Heart left ventricle (tissue), 16 donors: ENCODE measurements at regions of chr1 and their contacts with region 1.

Region 1: GRCh38 chr1:151008190-151008860 is at the start of gene PRUNE1:
- DNase-seq: peak; percentile 97 to 98 (median 98)
- ATAC-seq: peak; percentile 80 to 94 (median 92)
- H3K4me3 ChIP-seq: peak within 1 kb of the TSS; percentile 35 to 87 (median 75)
- H3K27ac ChIP-seq: peak within 1 kb of the TSS; percentile 80 to 96 (median 91)
- H3K4me1 ChIP-seq: peaks cover 12 to 89% (median 66%) of the 10 kb centered on the region in 12 donors
- H3K27me3 ChIP-seq: no peaks in the 10 kb centered on the region
- CTCF ChIP-seq: peak in 2 of 12 donors; percentile 9
- POLR2A ChIP-seq: peak; percentile 56 to 83
- total RNA-seq, gene PRUNE1: 32.5 to 65.3 (median 42.0) TPM

Region 2: DNA sequence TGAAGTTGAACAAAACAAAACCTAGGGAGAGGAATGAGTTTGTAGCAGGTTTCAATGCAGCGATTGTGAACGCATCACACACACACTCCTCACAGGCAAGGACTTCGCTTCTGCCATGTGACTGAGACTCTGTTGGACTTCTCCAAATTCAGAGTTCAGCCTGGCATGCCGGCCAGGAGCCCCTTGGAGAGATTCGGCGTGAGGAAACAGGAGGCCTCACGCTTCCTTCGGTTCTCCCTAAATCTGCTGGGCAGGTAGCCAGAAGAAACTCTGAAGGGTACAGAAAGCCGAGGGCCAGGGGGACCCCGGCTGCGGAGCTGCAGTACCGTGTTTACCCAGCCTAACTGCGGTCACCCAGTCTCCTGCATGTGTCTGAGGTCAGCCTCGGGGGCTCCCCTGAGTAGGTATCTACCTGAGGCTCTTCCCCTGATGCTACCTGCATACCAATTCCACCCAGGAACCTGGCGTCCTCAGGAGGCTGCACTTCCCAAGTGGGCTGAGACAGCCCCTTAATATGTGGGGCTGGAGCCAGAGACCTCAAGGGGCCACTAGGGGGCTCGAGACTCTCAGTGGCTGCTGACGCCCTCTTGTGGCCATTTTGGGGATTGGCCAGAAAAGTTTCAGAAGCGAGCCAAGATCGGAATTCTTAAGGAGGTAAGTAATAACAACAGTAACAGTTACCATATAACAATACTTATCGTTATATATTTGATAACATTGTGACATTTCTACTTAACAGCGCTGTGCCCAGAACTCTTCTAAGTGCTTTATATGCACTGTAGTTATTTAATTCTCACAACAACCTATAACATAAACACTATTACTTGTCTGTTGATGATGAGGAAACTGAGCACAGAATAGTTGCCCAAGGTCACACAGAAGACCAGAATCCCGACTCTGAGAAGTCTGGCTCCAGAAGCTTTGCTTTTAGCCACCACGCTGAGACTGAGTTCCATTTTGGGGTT is 29.0 kb before region 1 on chr1:
- intact Hi-C with region 1: loop called in 1 of 10 experiments (anchors 1 kb)
- DNase-seq: peak; percentile 84 to 89 (median 87)
- ATAC-seq: peak; percentile 17 to 60 (median 40)
- H3K4me3 ChIP-seq: peak overlapping the region in 7 of 12 donors; percentile 4 to 48 (median 19)
- H3K27ac ChIP-seq: peak overlapping the region in 6 of 12 donors; percentile 22 to 86 (median 42)
- H3K4me1 ChIP-seq: peaks cover 0 to 49% (median 9%) of the 10 kb centered on the region in 12 donors
- H3K27me3 ChIP-seq: no peaks in the 10 kb centered on the region
- CTCF ChIP-seq: peak; percentile 99 to 100 (median 100)
- POLR2A ChIP-seq: no peak

Region 3: GRCh38 chr1:151047925-151048645 is 39.8 kb after region 1 on chr1:
- intact Hi-C with region 1: loop called in 1 of 10 experiments (anchors 5 kb)
- DNase-seq: peak; percentile 72 to 84 (median 79)
- ATAC-seq: peak; percentile 70 to 86 (median 84)
- H3K4me3 ChIP-seq: peak overlapping the region; percentile 60 to 87 (median 77)
- H3K27ac ChIP-seq: peak overlapping the region; percentile 53 to 95 (median 90)
- H3K4me1 ChIP-seq: peaks cover 0 to 42% (median 19%) of the 10 kb centered on the region in 12 donors
- H3K27me3 ChIP-seq: no peaks in the 10 kb centered on the region
- CTCF ChIP-seq: peak in 10 of 12 donors; percentile 30 to 65 (median 50)
- POLR2A ChIP-seq: no peak

Region 4: DNA sequence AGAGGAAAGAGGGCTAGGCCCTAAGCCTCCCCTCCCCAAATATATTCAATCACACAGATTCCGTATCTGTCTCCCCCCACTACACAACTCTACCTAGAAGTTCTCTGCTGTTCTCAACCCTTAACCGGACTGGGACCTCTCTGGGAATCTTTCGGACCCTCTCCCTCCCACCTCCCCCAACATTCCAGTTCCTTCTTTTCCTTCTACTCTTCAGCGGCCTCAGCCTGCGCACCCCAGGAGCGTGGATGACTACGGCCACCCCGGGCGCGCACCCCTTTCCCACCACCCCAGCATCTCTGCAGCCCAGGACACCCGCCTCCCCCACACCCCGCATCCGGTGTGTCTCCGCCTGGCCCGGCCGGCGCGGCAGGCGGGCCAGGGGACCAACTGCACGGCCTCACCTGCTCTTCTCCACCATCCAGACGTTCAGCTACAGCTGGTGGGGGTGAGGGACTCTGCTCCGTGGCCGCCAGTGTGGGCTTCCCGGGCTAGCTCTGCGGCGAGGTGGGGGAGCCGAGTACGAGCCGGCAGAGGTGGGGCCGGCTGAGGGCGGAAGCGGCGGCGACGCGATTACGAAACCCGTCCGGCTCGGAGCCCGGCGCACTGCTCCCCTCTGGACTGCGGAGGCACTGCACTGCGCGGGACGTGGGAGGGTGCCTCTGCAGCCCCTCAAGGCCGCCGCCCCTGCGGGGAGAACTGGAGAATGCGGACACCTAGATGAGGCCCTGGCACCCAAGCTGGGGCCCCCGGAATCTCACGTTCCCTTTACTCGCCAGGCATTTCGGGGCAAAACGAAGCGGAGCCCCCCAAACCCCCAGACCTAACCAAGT is 51.0 kb after region 1 on chr1 and contains the start of gene CDC42SE1:
- intact Hi-C with region 1: loop called in 4 of 10 experiments (anchors 5 kb)
- DNase-seq: peak; percentile 87 to 93 (median 90)
- ATAC-seq: peak; percentile 87 to 93 (median 92)
- H3K4me3 ChIP-seq: peak within 1 kb of the TSS; percentile 71 to 98 (median 90)
- H3K27ac ChIP-seq: peak within 1 kb of the TSS; percentile 92 to 99 (median 96)
- H3K4me1 ChIP-seq: peaks cover 8 to 53% (median 31%) of the 10 kb centered on the region in 12 donors
- H3K27me3 ChIP-seq: no peaks in the 10 kb centered on the region
- CTCF ChIP-seq: peak; percentile 61 to 94 (median 86)
- POLR2A ChIP-seq: peak; percentile 52 to 86
- total RNA-seq, gene CDC42SE1: 21.7 to 65.9 (median 28.2) TPM

Region 5: GRCh38 chr1:151070474-151071276 is 62.4 kb after region 1 on chr1 and contains the start of gene GABPB2:
- intact Hi-C with region 1: loop called in 1 of 10 experiments (anchors 5 kb)
- DNase-seq: peak; percentile 94 to 97 (median 95)
- ATAC-seq: peak; percentile 92 to 96 (median 94)
- H3K4me3 ChIP-seq: peak within 1 kb of the TSS; percentile 44 to 98 (median 81)
- H3K27ac ChIP-seq: peak within 1 kb of the TSS; percentile 92 to 100 (median 99)
- H3K4me1 ChIP-seq: peaks cover 0 to 23% (median 10%) of the 10 kb centered on the region in 12 donors
- H3K27me3 ChIP-seq: no peaks in the 10 kb centered on the region
- CTCF ChIP-seq: peak; percentile 88 to 99 (median 92)
- POLR2A ChIP-seq: peak in 1 of 2 donors; percentile 35
- total RNA-seq, gene GABPB2: 5.9 to 15.2 (median 11.7) TPM

Region 6: GRCh38 chr1:151146412-151147140 is 138.3 kb after region 1 on chr1 and contains the start of gene SEMA6C:
- intact Hi-C with region 1: loop called in 1 of 10 experiments (anchors 5 kb)
- DNase-seq: peak; percentile 97 to 98 (median 98)
- ATAC-seq: peak; percentile 93 to 95 (median 93)
- H3K4me3 ChIP-seq: peak within 1 kb of the TSS; percentile 66 to 97 (median 84)
- H3K27ac ChIP-seq: peak within 1 kb of the TSS; percentile 79 to 92 (median 87)
- H3K4me1 ChIP-seq: peaks cover 13 to 53% (median 39%) of the 10 kb centered on the region in 12 donors
- H3K27me3 ChIP-seq: peaks cover 0 to 5% (median 0%) of the 10 kb centered on the region in 9 donors
- CTCF ChIP-seq: no peak
- POLR2A ChIP-seq: peak; percentile 94 to 97
- total RNA-seq, gene SEMA6C: 36.4 to 97.1 (median 50.8) TPM

Region 7: DNA sequence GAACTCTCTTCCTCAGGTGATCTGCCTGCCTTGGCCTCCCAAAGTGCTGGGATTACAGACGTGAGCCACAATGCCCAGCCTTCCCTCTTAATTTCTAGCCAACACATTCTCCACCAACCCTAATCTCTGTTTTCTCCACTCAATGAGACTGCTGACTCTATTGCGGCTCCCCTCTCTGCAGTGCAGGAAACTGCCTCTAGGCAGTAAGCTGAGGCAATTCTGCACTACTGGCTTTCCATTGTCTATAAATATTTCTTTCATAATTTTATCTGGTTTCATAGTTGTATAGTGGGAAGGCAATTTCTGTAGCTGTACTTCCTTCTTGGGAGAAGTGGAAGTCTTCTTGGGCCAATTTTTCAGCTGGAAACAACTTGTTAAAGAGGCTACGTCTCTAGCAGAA is 744.8 kb after region 1 on chr1:
- intact Hi-C with region 1: no loop called
- DNase-seq: no peak
- ATAC-seq: no peak
- H3K4me3 ChIP-seq: no peak overlapping the region
- H3K27ac ChIP-seq: no peak overlapping the region
- H3K4me1 ChIP-seq: no peaks in the 10 kb centered on the region
- H3K27me3 ChIP-seq: peaks cover 0 to 2% (median 0%) of the 10 kb centered on the region in 9 donors
- CTCF ChIP-seq: no peak
- POLR2A ChIP-seq: no peak